Endothelial cell of umbilical vein (primary cell): ENCODE measurements at regions of chr3 and their contacts with region 1.

Region 1: GRCh38 chr3:107660306-107660976 is 137.7 kb downstream of the BBX start:
- DNase-seq: peak; percentile 56
- H3K4me3 ChIP-seq: no peak overlapping the region
- H3K27ac ChIP-seq: no peak overlapping the region
- H3K4me1 ChIP-seq: peaks cover 35% of the 10 kb centered on the region
- H3K27me3 ChIP-seq: no peaks in the 10 kb centered on the region
- CTCF ChIP-seq: peak; percentile 34 to 46
- POLR2A ChIP-seq: no peak

Region 2: DNA sequence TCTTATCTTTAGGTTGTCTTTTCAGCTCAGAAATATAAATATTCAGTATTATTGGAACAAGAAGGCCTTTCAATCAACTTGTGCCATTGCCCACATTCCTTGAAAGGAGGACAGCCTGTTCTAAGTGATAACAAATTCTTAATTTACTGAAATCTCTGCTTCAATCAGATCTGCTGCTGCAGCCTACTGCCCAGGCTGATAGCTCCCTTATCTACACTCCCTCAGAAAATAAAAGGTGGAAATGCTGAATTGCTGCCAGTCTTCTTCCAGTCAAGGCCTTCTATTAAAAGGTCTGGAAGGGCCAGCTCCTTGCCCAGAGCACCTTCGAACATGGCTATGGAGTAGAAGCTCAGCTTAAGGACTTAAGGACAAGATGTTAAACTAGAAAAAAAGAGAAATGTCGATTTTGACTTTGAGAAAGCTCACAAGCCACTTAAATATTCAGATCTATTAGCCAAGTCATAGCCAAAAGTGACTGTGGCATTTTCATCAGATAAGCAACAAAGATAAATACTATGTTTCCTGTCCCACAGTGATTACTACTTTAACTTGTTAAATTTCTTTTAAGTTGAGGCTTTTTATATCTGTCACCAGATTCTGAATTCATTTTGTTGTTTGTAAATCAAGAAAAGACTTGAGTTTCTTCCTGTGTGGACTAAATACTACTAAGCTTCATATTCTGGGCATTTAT is 1311.1 kb before region 1 on chr3:
- CTCF ChIA-PET with region 1: no interaction called
- POLR2A ChIA-PET with region 1: no interaction called
- dilution Hi-C with region 1: no loop called
- intact Hi-C with region 1: no loop called
- DNase-seq: peak; percentile 79
- H3K4me3 ChIP-seq: no peak overlapping the region
- H3K27ac ChIP-seq: no peak overlapping the region
- H3K4me1 ChIP-seq: peaks cover 5% of the 10 kb centered on the region
- H3K27me3 ChIP-seq: no peaks in the 10 kb centered on the region
- CTCF ChIP-seq: no peak
- POLR2A ChIP-seq: no peak

Region 3: DNA sequence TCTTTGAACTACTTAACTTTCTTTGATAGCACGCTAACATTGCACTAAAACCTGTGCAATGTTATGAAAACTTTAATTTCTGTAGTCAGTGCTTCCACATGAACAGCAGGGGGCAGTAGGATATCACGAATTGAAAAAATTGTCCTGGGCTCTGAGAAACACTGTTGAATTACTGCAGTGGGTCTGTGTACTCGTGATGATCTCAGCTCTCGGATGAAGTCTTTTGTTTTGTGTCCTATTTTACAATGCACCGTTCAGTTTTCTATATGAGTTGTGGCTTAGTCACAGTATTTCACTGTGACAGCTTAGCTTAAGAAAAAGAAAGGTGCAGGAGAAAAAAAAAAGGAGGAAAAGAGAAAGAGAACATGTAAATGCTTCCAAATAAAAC is 424.5 kb before region 1 on chr3:
- CTCF ChIA-PET with region 1: interaction called, 16 read pairs
- POLR2A ChIA-PET with region 1: no interaction called
- dilution Hi-C with region 1: no loop called
- intact Hi-C with region 1: loop called (anchors 2 kb)
- DNase-seq: peak; percentile 88
- H3K4me3 ChIP-seq: peak overlapping the region; percentile 28 to 86 (median 53)
- H3K27ac ChIP-seq: no peak overlapping the region
- H3K4me1 ChIP-seq: no peaks in the 10 kb centered on the region
- H3K27me3 ChIP-seq: no peaks in the 10 kb centered on the region
- CTCF ChIP-seq: peak; percentile 63 to 74
- POLR2A ChIP-seq: no peak

Region 4: DNA sequence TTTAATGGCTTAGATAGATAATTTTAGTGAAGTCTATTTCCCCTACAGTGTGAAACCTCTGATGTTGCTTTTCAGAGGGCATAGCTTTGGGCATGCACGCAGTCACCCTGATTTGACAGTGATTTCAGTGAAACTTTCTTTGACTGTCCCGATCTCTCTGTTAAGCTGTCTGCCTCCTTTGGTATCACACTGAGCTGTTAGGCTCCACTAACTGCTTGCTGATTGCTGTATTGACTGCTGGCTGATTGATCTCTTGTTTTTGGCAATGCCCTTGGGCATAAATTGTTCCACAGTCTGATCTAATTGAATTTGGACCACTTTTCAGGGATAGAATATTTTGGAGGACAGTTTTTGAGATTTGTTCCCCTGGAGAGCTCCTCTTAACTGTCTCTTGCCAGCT is 351.7 kb before region 1 on chr3:
- CTCF ChIA-PET with region 1: no interaction called
- POLR2A ChIA-PET with region 1: no interaction called
- dilution Hi-C with region 1: no loop called
- intact Hi-C with region 1: no loop called
- DNase-seq: no peak
- H3K4me3 ChIP-seq: no peak overlapping the region
- H3K27ac ChIP-seq: no peak overlapping the region
- H3K4me1 ChIP-seq: no peaks in the 10 kb centered on the region
- H3K27me3 ChIP-seq: no peaks in the 10 kb centered on the region
- CTCF ChIP-seq: no peak
- POLR2A ChIP-seq: no peak

Region 5: GRCh38 chr3:107574650-107575049 is 85.8 kb before region 1 on chr3:
- CTCF ChIA-PET with region 1: interaction called, 10 read pairs
- POLR2A ChIA-PET with region 1: no interaction called
- dilution Hi-C with region 1: no loop called
- intact Hi-C with region 1: loop called (anchors 1 kb)
- DNase-seq: peak; percentile 66
- H3K4me3 ChIP-seq: no peak overlapping the region
- H3K27ac ChIP-seq: no peak overlapping the region
- H3K4me1 ChIP-seq: no peaks in the 10 kb centered on the region
- H3K27me3 ChIP-seq: no peaks in the 10 kb centered on the region
- CTCF ChIP-seq: peak; percentile 33 to 46
- POLR2A ChIP-seq: no peak

Region 6: GRCh38 chr3:107627962-107628542 is 32.4 kb before region 1 on chr3:
- CTCF ChIA-PET with region 1: interaction called, 14 read pairs
- POLR2A ChIA-PET with region 1: no interaction called
- dilution Hi-C with region 1: no loop called
- intact Hi-C with region 1: no loop called
- DNase-seq: peak; percentile 11
- H3K4me3 ChIP-seq: no peak overlapping the region
- H3K27ac ChIP-seq: no peak overlapping the region
- H3K4me1 ChIP-seq: no peaks in the 10 kb centered on the region
- H3K27me3 ChIP-seq: no peaks in the 10 kb centered on the region
- CTCF ChIP-seq: no peak
- POLR2A ChIP-seq: no peak

Region 7: GRCh38 chr3:107690522-107691138 is 30.2 kb after region 1 on chr3:
- CTCF ChIA-PET with region 1: interaction called, 49 read pairs
- POLR2A ChIA-PET with region 1: no interaction called
- dilution Hi-C with region 1: no loop called
- intact Hi-C with region 1: no loop called
- DNase-seq: peak; percentile 51
- H3K4me3 ChIP-seq: no peak overlapping the region
- H3K27ac ChIP-seq: no peak overlapping the region
- H3K4me1 ChIP-seq: no peaks in the 10 kb centered on the region
- H3K27me3 ChIP-seq: no peaks in the 10 kb centered on the region
- CTCF ChIP-seq: peak; percentile 25 to 27
- POLR2A ChIP-seq: no peak

Region 8: DNA sequence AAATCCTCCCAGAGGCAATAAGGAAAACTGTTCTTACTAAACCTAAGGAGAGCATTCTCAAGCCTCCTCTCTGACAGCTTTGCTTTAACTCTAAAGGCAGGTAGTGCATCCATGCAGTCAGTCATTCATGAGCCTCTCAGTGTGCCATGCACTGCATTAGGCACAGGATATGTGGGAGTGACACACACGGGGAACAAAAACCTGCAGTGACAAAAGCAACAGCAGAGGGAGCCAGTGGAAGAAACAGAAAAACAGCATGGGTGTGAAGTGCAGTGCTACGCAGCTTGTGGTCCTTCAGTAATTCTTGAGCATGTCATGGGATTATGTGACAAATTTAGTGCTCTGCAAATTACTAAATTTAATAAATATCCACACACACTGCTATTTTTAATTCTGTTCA is 93.0 kb after region 1 on chr3:
- CTCF ChIA-PET with region 1: interaction called, 14 read pairs
- POLR2A ChIA-PET with region 1: no interaction called
- dilution Hi-C with region 1: no loop called
- intact Hi-C with region 1: no loop called
- DNase-seq: peak; percentile 47
- H3K4me3 ChIP-seq: no peak overlapping the region
- H3K27ac ChIP-seq: no peak overlapping the region
- H3K4me1 ChIP-seq: no peaks in the 10 kb centered on the region
- H3K27me3 ChIP-seq: no peaks in the 10 kb centered on the region
- CTCF ChIP-seq: peak; percentile 29 to 52
- POLR2A ChIP-seq: no peak

Region 9: DNA sequence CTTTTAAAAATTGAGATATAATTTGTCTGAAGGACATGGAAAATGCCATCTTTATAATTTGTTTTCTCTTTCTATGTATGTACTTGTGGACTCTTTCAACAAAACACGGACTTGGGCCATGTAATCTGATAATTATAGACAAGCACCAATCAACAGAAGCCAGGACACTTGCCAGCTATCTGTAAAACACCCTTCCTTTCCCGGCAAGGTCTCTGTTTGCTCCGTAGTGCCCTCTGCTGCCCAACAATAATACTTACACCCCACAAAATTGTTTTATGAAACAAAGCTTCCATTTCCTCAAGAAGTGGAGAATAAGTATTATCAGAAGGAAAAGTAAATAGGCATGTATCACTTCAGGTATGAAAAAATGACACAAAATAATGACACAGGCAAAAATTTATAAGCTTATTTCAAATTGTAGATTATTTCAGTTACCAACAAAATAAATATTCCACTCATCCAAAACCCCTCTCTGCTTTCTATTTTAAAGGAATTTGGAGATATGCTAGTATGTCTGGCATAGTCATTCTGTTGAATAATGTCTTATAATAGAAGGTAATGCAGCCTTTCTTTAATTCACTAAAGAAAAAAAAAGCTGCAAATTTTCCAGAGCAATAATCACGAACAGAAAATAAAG is 817.2 kb after region 1 on chr3:
- CTCF ChIA-PET with region 1: interaction called, 21 read pairs
- POLR2A ChIA-PET with region 1: no interaction called
- dilution Hi-C with region 1: no loop called
- intact Hi-C with region 1: loop called (anchors 5 kb)
- DNase-seq: peak; percentile 77
- H3K4me3 ChIP-seq: no peak overlapping the region
- H3K27ac ChIP-seq: no peak overlapping the region
- H3K4me1 ChIP-seq: peaks cover 2% of the 10 kb centered on the region
- H3K27me3 ChIP-seq: no peaks in the 10 kb centered on the region
- CTCF ChIP-seq: peak; percentile 55 to 57
- POLR2A ChIP-seq: no peak